Activated B cell treated with CpG ODN at 0.5 μM for 24 hours (primary cell): ENCODE measurements at regions of chr12 and their contacts with region 1.

Region 1: GRCh38 chr12:112937741-112938719 is at the start of gene OAS3:
- DNase-seq: peak; percentile 55
- ATAC-seq: peak; percentile 74
- H3K4me3 Mint-ChIP-seq: peak within 1 kb of the TSS; percentile 89
- H3K27ac Mint-ChIP-seq: peak within 1 kb of the TSS; percentile 82
- H3K4me1 Mint-ChIP-seq: peaks cover 28% of the 10 kb centered on the region
- H3K27me3 Mint-ChIP-seq: no peaks in the 10 kb centered on the region
- CTCF ChIP-seq: no peak
- total RNA-seq, gene OAS3: 23.1 and 27.2 TPM in 2 replicates

Region 2: DNA sequence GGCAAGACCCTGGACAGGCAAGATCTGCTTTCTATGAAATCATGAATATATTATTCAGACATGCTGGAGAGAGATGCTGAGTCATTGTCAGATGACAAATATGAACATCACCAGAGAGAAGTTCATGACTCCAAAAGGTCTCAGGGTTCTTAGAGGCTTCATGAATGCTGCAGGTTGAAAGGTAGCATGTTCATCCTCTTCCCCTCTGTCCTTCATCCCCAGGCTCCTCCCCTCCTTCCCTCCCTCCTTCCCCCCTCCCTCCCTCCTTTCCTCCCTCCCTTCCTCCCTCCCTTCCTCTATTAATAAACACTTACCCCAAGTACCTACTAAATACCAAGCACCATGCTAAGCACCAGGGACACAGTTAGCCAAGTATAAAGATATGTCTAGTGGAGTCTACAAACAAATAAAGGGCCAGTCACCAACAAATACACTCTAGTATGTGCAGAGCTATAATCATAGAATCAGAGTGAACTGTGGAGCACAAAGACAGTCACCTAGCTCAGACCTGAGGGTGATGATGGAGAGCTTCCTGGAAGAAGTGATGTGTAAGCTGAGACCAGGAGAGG is 100.3 kb before region 1 on chr12:
- CTCF ChIA-PET with region 1: no interaction called
- POLR2A ChIA-PET with region 1: no interaction called
- intact Hi-C with region 1: no loop called
- DNase-seq: no peak
- ATAC-seq: no peak
- H3K4me3 Mint-ChIP-seq: no peak overlapping the region
- H3K27ac Mint-ChIP-seq: no peak overlapping the region
- H3K4me1 Mint-ChIP-seq: no peaks in the 10 kb centered on the region
- H3K27me3 Mint-ChIP-seq: peaks cover 30% of the 10 kb centered on the region
- CTCF ChIP-seq: no peak

Region 3: GRCh38 chr12:112900299-112901145 is 37.5 kb before region 1 on chr12:
- CTCF ChIA-PET with region 1: interaction called, 10 read pairs
- POLR2A ChIA-PET with region 1: no interaction called
- intact Hi-C with region 1: no loop called
- DNase-seq: no peak
- ATAC-seq: peak; percentile 45
- H3K4me3 Mint-ChIP-seq: no peak overlapping the region
- H3K27ac Mint-ChIP-seq: no peak overlapping the region
- H3K4me1 Mint-ChIP-seq: peaks cover 42% of the 10 kb centered on the region
- H3K27me3 Mint-ChIP-seq: peaks cover 2% of the 10 kb centered on the region
- CTCF ChIP-seq: peak; percentile 73

Region 4: DNA sequence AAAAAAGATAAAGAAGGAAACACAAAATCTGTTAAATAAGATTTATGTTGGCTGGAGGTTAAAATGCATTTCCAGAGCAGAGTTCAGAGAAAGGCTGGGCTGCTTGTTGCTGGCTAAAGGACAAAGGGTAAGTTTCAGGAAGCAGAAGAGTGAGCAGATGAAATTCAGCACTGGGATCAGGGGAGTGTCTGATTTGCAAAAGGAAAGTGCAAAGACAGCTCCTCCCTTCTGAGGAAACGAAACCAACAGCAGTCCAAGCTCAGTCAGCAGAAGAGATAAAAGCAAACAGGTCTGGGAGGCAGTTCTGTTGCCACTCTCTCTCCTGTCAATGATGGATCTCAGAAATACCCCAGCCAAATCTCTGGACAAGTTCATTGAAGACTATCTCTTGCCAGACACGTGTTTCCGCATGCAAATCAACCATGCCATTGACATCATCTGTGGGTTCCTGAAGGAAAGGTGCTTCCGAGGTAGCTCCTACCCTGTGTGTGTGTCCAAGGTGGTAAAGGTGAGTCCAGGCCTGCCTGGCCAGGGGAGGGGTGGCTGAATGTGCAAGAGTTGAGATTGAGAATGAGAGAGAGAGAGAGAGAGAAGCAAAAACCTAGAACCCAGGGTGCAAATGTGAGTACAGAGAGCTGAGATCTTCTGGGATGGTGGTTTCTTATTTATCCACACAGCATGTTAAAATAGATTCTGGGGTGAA is 31.2 kb before region 1 on chr12 and contains the start of gene OAS1:
- CTCF ChIA-PET with region 1: no interaction called
- POLR2A ChIA-PET with region 1: interaction called, 14 read pairs
- intact Hi-C with region 1: loop called (anchors 2 kb)
- DNase-seq: no peak
- ATAC-seq: peak; percentile 80
- H3K4me3 Mint-ChIP-seq: peak within 1 kb of the TSS; percentile 88
- H3K27ac Mint-ChIP-seq: peak within 1 kb of the TSS; percentile 92
- H3K4me1 Mint-ChIP-seq: peaks cover 88% of the 10 kb centered on the region
- H3K27me3 Mint-ChIP-seq: no peaks in the 10 kb centered on the region
- CTCF ChIP-seq: no peak
- total RNA-seq, gene OAS1: 27.8 and 30.6 TPM in 2 replicates

Region 5: DNA sequence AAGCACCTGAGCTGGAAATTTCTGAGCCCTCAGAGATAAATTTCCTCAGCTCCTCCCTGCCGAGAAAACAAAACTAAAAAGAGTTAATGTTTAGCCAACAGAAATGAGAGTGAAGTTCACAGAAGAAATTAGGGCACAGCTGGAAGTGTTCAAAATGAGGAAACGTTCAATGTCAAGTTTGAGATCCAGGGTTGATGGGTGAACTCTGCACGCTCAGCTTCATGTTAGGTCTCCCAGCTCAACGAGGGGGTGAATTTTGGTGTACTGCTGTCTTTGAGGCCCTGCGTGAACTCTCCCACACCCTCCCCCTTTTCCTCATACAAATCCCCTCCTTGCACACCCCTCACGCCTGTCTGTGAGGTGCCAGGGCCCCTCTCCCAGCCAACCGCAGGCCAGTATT is 13.0 kb before region 1 on chr12:
- CTCF ChIA-PET with region 1: no interaction called
- POLR2A ChIA-PET with region 1: interaction called, 3 read pairs
- intact Hi-C with region 1: loop called (anchors 1 kb)
- DNase-seq: no peak
- ATAC-seq: peak; percentile 64
- H3K4me3 Mint-ChIP-seq: peak overlapping the region; percentile 28
- H3K27ac Mint-ChIP-seq: peak overlapping the region; percentile 73
- H3K4me1 Mint-ChIP-seq: peaks cover 46% of the 10 kb centered on the region
- H3K27me3 Mint-ChIP-seq: no peaks in the 10 kb centered on the region
- CTCF ChIP-seq: no peak

Region 6: DNA sequence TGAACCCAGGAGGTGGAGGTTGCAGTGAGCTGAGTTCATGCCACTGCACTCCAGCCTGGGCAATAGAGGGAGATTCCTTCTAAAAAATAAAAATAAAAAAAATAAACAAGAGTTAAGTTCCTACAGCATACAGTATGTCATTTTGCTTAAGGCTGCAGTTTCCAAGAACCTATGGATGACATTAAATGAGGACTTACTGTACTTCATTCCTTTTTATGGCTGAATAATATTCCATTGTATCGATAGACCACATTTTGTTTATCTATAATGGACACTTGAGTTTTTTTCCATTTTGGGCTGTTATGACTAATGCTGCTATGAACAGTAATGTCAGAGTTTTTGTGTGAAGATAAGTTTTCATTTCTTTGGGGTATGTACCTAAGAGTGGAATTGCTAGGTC is 180.1 kb after region 1 on chr12:
- CTCF ChIA-PET with region 1: no interaction called
- POLR2A ChIA-PET with region 1: interaction called, 12 read pairs
- intact Hi-C with region 1: no loop called
- DNase-seq: no peak
- ATAC-seq: no peak
- H3K4me3 Mint-ChIP-seq: no peak overlapping the region
- H3K27ac Mint-ChIP-seq: no peak overlapping the region
- H3K4me1 Mint-ChIP-seq: no peaks in the 10 kb centered on the region
- H3K27me3 Mint-ChIP-seq: peaks cover 3% of the 10 kb centered on the region
- CTCF ChIP-seq: no peak